Lower leg skin (tissue), 4 donors: ENCODE measurements at regions of chr11 and their contacts with region 1.

Region 1: GRCh38 chr11:27754035-27755017 is 54.1 kb upstream of the BDNF start:
- DNase-seq: no peak
- H3K4me3 ChIP-seq: no peak overlapping the region
- CTCF ChIP-seq: no peak
- POLR2A ChIP-seq: no peak

Region 2: DNA sequence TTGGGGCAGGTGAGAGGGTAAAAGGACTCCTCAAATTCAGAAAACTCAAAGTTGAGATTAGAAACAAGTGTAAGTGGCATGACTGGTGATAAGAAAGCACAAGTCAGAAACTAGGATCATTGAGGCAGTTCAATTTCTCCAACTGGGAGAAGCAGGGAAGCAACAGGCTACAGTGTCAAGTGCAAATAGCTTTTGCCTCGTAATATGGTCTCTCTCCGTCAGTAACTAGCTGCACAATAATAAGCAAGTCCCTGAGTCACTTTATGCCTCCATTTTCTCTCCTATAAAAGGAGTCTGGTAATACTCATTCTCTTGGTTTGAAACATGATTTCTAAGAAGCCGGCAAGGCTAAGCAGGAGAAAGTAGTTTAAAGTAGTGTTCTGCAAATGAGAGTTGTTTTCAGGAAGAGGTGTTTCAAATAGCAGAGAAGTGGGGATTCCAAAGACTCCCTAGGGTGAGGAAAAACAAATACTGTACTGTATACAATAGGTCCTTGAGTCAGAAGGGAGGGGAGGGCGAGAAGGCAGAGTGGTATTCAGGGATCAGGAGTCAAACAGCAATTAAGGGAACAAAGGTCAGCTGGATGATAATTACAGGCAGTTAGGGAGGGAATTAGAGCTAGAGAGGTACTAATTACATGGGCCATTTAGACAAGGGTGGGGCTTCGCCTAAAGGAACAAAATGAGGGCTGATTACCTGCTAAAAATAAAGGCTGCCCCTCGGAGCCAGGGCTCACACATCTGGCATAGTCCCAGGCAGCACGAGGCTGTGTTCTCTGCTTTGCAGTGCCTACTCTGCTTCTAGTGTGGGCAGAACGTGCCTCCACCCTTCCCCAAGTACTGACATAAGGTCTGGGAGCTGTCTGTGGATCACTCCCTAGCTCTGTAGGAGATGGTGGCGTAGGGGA is 41.9 kb after region 1 on chr11:
- intact Hi-C with region 1: no loop called
- DNase-seq: no peak
- H3K4me3 ChIP-seq: no peak overlapping the region
- CTCF ChIP-seq: no peak
- POLR2A ChIP-seq: no peak

Region 3: GRCh38 chr11:28657128-28658030 is 903.1 kb after region 1 on chr11:
- intact Hi-C with region 1: loop called (anchors 10 kb)
- DNase-seq: no peak
- H3K4me3 ChIP-seq: no peak overlapping the region
- CTCF ChIP-seq: no peak
- POLR2A ChIP-seq: no peak